SK-N-SH (cell line): ENCODE measurements at regions of chr15 and their contacts with region 1.

Region 1: GRCh38 chr15:58980351-58980939 is 7.0 kb upstream of the RNF111 start:
- DNase-seq: peak; percentile 34
- H3K4me3 ChIP-seq: no peak overlapping the region
- H3K27ac ChIP-seq: no peak overlapping the region
- H3K4me1 ChIP-seq: no peaks in the 10 kb centered on the region
- H3K27me3 ChIP-seq: no peaks in the 10 kb centered on the region
- CTCF ChIP-seq: peak; percentile 70
- EP300 ChIP-seq: no peak
- RAD21 ChIP-seq: peak; percentile 78

Region 2: DNA sequence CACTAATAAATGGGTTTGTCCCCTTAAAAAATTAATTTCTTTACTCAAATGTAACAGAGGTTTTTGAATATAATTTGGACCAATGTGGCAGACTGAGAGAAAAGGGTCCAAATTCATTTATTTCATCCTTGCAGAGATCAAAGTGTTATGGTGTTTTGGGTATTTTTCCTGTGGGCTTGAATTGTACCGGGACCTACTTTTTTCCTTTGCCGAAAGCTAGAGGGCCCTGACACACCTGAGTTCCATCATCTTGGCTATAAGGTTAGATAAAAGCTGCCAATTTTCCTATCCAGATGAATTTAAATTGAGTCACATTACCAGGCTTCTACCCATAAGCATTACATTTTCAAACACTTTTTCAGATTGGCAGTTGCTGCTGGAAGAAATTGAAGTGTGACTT is 125.4 kb after region 1 on chr15:
- CTCF ChIA-PET with region 1: interaction called, 12 read pairs
- POLR2A ChIA-PET with region 1: no interaction called
- DNase-seq: peak; percentile 25
- H3K4me3 ChIP-seq: peak overlapping the region; percentile 81 to 89
- H3K27ac ChIP-seq: peak overlapping the region; percentile 34 to 75; a peak in 3 of 4 replicates
- H3K4me1 ChIP-seq: peaks cover 0 to 7% of the 10 kb centered on the region in 2 experiments; a peak in 2 of 4 replicates
- H3K27me3 ChIP-seq: no peaks in the 10 kb centered on the region
- CTCF ChIP-seq: peak; percentile 27; the same call in 1 of the 2 replicates
- EP300 ChIP-seq: no peak
- RAD21 ChIP-seq: 0 out of 2 replicates have a peak, but pooled peaks have one; percentile 15